Activated naive CD4-positive, alpha-beta T cell treated with anti-CD3 and anti-CD28 coated beads for 36 hours (primary cell): ENCODE measurements at regions of chr9 and their contacts with region 1.

Region 1: DNA sequence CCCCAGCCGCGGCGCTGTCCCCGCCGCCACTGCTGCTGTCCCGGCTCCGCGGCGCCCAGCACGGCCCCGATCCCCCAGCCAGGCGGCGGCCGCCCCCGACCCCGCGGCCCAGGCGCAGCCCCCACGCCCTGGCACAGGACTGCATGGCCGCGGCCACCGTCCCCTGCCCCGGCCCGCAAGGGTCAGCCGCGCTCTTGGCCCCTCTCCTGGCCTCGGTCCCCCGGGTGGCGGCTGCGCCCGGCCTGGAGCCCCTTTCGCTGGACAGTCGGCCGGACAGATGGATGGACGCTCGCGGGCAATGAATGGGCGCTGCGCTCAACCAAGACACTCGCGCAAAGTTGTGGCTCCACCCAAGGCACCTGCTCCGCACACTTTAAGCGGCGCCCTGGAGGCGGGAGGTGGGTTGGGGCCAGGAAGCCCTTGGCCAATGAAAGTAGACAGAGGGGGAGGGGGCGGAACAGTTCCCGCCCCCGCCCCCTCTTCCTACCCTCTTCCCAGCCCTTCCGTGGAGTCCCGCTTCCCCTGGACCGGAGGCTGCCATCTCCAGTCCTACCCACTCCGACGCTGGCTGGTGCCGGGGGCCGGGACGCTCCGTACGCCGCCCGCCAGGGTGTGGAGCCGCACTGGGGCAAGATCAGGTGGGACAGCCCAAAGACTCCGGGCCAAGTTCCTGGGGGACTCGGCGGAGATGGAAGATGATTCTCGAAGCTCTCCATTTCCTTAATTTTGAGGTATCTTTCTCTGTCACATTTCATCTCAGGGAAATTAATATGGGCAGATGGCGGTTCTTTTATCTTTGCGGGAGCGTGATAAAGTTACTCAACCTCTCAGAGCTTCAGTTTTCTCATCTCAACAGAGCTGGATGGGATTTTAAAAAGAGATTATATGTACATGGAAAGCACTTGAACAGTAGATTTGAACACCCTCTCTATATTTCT is at the start of gene GLDC:
- DNase-seq: peak; percentile 62
- H3K4me3 Mint-ChIP-seq: peak within 1 kb of the TSS; percentile 76
- H3K27ac Mint-ChIP-seq: no peak within 1 kb of the TSS
- H3K4me1 Mint-ChIP-seq: peaks cover 19% of the 10 kb centered on the region
- H3K27me3 Mint-ChIP-seq: peaks cover 45% of the 10 kb centered on the region
- total RNA-seq, gene GLDC: 1.7 to 1.9 TPM

Region 2: GRCh38 chr9:6598249-6598725 is 47.3 kb before region 1 on chr9:
- CTCF ChIA-PET with region 1: no interaction called
- intact Hi-C with region 1: loop called (anchors 2 kb)
- DNase-seq: peak; percentile 64
- H3K4me3 Mint-ChIP-seq: no peak overlapping the region
- H3K27ac Mint-ChIP-seq: peak overlapping the region; percentile 54
- H3K4me1 Mint-ChIP-seq: peaks cover 7% of the 10 kb centered on the region
- H3K27me3 Mint-ChIP-seq: no peaks in the 10 kb centered on the region

Region 3: DNA sequence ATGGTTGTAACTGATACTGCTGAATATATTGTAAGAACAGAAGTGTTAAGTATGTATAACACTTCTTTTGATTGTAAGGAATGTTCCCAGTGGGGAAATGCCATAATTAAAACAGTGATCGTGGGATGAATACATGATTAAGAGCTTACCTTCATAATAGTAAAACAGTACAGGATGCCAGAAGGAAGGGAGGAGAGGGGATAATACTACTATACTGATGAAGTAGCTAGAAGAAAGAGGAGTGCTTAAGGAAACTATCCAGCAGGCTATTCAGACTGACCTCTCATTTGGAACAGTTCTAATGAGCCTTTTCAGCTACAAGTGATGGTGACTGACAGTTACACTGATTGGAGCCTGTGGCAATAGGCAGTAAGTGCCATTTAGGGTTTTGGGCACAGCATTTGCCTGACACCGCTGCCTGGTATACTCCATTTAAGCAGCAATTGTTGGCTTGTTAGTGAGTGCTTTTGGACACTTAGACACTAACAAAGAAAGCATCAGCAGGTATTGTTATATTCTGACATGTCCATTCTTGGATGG is 78.3 kb after region 1 on chr9:
- CTCF ChIA-PET with region 1: no interaction called
- intact Hi-C with region 1: no loop called
- DNase-seq: no peak
- H3K4me3 Mint-ChIP-seq: no peak overlapping the region
- H3K27ac Mint-ChIP-seq: no peak overlapping the region
- H3K4me1 Mint-ChIP-seq: no peaks in the 10 kb centered on the region
- H3K27me3 Mint-ChIP-seq: no peaks in the 10 kb centered on the region

Region 4: GRCh38 chr9:6845880-6846279 is 200.3 kb after region 1 on chr9:
- CTCF ChIA-PET with region 1: no interaction called
- intact Hi-C with region 1: no loop called
- DNase-seq: no peak
- H3K4me3 Mint-ChIP-seq: no peak overlapping the region
- H3K27ac Mint-ChIP-seq: no peak overlapping the region
- H3K4me1 Mint-ChIP-seq: peaks cover 6% of the 10 kb centered on the region
- H3K27me3 Mint-ChIP-seq: no peaks in the 10 kb centered on the region

Region 5: DNA sequence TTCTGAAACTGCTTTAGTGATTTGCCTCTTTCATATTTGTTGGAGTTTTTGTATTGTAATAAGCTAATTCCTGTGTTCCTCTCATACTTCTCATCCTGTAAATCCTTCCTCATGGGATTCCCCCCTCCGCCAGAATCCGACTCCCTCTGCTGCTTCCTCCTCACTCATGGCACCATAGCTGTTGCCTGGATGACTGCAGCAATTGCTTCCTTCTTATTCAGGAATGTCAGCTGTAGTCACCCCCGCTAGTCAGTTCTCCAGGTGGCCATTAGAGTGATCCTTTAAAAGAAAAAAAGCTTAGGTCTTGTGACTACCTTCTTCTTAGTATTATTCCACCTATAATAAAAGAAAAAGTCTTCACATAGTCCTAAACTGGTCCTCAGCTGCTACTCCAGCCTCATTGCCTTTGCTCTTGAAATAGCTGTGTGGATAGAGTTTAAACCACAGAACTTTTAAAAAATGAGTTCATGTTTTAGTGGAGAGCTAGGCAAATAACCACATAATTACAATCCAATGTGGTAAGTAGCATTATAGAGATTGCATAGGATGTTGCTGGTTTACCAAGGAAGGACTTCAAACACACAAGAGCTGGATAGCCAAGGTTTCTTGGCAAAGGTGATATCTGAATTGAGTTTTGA is 339.4 kb after region 1 on chr9:
- CTCF ChIA-PET with region 1: no interaction called
- intact Hi-C with region 1: no loop called
- DNase-seq: no peak
- H3K4me3 Mint-ChIP-seq: no peak overlapping the region
- H3K27ac Mint-ChIP-seq: no peak overlapping the region
- H3K4me1 Mint-ChIP-seq: no peaks in the 10 kb centered on the region
- H3K27me3 Mint-ChIP-seq: no peaks in the 10 kb centered on the region

Region 6: GRCh38 chr9:7094052-7094451 is 448.4 kb after region 1 on chr9:
- CTCF ChIA-PET with region 1: no interaction called
- intact Hi-C with region 1: no loop called
- DNase-seq: no peak
- H3K4me3 Mint-ChIP-seq: no peak overlapping the region
- H3K27ac Mint-ChIP-seq: no peak overlapping the region
- H3K4me1 Mint-ChIP-seq: no peaks in the 10 kb centered on the region
- H3K27me3 Mint-ChIP-seq: no peaks in the 10 kb centered on the region